HEK293 (cell line): ENCODE measurements at regions of chr7 and their contacts with region 1.

Region 1: GRCh38 chr7:143240291-143241168 is 18.7 kb downstream of the TAS2R40 start:
- H3K4me3 ChIP-seq: no peak overlapping the region
- H3K27ac ChIP-seq: no peak overlapping the region
- H3K4me1 ChIP-seq: no peaks in the 10 kb centered on the region
- CTCF ChIP-seq: peak; percentile 39; the same call in 1 of the 2 replicates

Region 2: DNA sequence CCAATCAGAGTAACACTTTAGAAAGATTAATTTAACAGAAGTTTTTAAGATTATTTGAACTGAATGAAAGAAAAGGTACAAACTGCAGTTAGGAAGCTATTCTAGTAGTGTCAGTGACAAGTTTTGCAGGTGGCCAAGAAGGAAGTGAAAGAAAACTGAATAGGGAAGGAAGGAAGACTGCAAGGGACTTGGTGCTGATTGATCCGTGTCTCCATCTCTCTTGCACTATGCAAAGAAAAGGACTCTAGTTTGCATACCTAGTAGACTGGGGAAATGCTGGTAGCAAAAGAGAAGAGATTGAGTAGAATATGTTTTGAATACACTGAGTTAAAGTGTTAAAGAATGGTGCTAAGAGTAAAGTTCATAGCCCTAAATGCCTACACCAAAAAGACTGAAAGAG is 155.4 kb before region 1 on chr7:
- CTCF ChIA-PET with region 1: no interaction called
- POLR2A ChIA-PET with region 1: no interaction called
- H3K4me3 ChIP-seq: no peak overlapping the region
- H3K27ac ChIP-seq: no peak overlapping the region
- H3K4me1 ChIP-seq: no peaks in the 10 kb centered on the region
- CTCF ChIP-seq: no peak

Region 3: GRCh38 chr7:143263266-143264195 is 23.0 kb after region 1 on chr7 and contains the start of gene GSTK1:
- CTCF ChIA-PET with region 1: interaction called, 56 read pairs
- POLR2A ChIA-PET with region 1: interaction called, 6 read pairs
- H3K4me3 ChIP-seq: peak within 1 kb of the TSS; percentile 78
- H3K27ac ChIP-seq: peak within 1 kb of the TSS; percentile 26; the same call in 1 of the 2 replicates
- H3K4me1 ChIP-seq: no peaks in the 10 kb centered on the region
- CTCF ChIP-seq: no peak

Region 4: GRCh38 chr7:143299840-143300239 is 59.3 kb after region 1 on chr7:
- CTCF ChIA-PET with region 1: interaction called, 49 read pairs
- POLR2A ChIA-PET with region 1: interaction called, 3 read pairs
- H3K4me3 ChIP-seq: no peak overlapping the region
- H3K27ac ChIP-seq: no peak overlapping the region
- H3K4me1 ChIP-seq: no peaks in the 10 kb centered on the region
- CTCF ChIP-seq: peak; percentile 20; the same call in 1 of the 2 replicates

Region 5: GRCh38 chr7:143334244-143334643 is 93.7 kb after region 1 on chr7:
- CTCF ChIA-PET with region 1: interaction called, 12 read pairs
- POLR2A ChIA-PET with region 1: no interaction called
- H3K4me3 ChIP-seq: no peak overlapping the region
- H3K27ac ChIP-seq: no peak overlapping the region
- H3K4me1 ChIP-seq: no peaks in the 10 kb centered on the region
- CTCF ChIP-seq: no peak